Common myeloid progenitor, CD34-positive (primary cell): ENCODE measurements at regions of chr2 and their contacts with region 1.

Region 1: DNA sequence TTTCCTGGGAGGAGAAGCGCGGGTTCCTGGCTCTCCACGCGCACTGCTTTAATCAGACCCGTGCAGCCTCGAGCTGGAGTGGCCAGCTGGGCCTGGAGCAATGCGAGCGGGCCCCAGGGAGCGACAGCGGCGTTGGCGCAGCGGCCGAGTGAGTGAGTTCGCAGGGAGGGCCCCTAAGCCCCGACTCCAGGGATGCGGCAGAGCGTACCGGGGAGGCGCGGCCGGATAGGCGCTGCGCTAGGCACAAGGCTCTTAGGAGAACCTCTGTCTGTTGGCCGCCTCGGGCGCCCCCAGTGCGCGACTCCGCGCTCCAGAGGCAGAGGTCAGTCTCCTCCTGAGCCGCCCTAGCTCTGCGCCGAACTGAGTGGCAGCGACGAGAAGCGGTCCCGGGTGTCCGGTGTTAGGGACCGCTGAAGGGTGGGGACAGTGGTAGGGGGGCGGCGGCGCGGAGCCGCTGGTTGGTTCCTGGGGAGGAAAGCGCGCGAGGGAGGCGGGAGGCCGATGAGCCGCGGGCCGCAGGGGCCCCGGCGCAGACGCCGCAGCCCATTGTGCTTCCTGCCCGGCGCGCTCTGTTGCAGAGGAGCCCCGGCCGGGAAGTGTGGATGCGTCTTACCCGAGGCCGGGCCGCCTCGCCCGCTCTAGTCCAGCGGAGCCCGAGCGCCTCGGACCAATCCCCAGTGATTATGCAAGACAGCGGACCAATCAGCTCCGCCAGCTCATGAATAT is 410 bp upstream of the DLX1 start:
- DNase-seq: peak in 2 of 3 donors; percentile 14 to 50
- H3K4me3 ChIP-seq: peak overlapping the region; percentile 2 to 71 (median 57)
- H3K27ac ChIP-seq: no peak overlapping the region
- H3K4me1 ChIP-seq: peaks cover 0 to 53% (median 43%) of the 10 kb centered on the region in 4 experiments
- H3K27me3 ChIP-seq: peaks cover 47 to 100% (median 78%) of the 10 kb centered on the region in 5 experiments

Region 2: GRCh38 chr2:172102391-172103278 is 17.7 kb after region 1 on chr2 and contains the start of gene DLX2:
- CTCF ChIA-PET with region 1: interaction called, 128 read pairs
- POLR2A ChIA-PET with region 1: interaction called, 3 read pairs
- DNase-seq: peak; percentile 82 to 86 (median 83)
- H3K4me3 ChIP-seq: peak within 1 kb of the TSS in 6 of 7 experiments; percentile 29 to 74 (median 64)
- H3K27ac ChIP-seq: no peak within 1 kb of the TSS
- H3K4me1 ChIP-seq: peaks cover 8 to 63% (median 62%) of the 10 kb centered on the region in 4 experiments
- H3K27me3 ChIP-seq: peaks cover 18 to 100% (median 62%) of the 10 kb centered on the region in 5 experiments